HCT116 (cell line): ENCODE measurements at regions of chr1 and their contacts with region 1.

Region 1: GRCh38 chr1:156319664-156320063 is 18.4 kb downstream of the CCT3 start:
- DNase-seq: no peak
- ATAC-seq: no peak
- H3K4me3 ChIP-seq: no peak overlapping the region
- H3K27ac ChIP-seq: no peak overlapping the region
- H3K4me1 ChIP-seq: no peaks in the 10 kb centered on the region
- H3K27me3 ChIP-seq: no peaks in the 10 kb centered on the region
- CTCF ChIP-seq: peak; percentile 42 to 63 (median 53); a peak in 5 of 6 replicates
- POLR2A ChIP-seq: no peak
- RAD21 ChIP-seq: peak; percentile 62

Region 2: GRCh38 chr1:156140879-156141252 is 178.8 kb before region 1 on chr1:
- CTCF ChIA-PET with region 1: interaction called, 12 read pairs
- POLR2A ChIA-PET with region 1: no interaction called
- RAD21 ChIA-PET with region 1: no interaction called
- intact Hi-C with region 1: loop called (anchors 5 kb)
- DNase-seq: no peak
- ATAC-seq: no peak; the same call in 1 of the 2 replicates
- H3K4me3 ChIP-seq: no peak overlapping the region
- H3K27ac ChIP-seq: no peak overlapping the region
- H3K4me1 ChIP-seq: peaks cover 4 to 9% of the 10 kb centered on the region in 2 experiments
- H3K27me3 ChIP-seq: no peaks in the 10 kb centered on the region
- CTCF ChIP-seq: no peak
- POLR2A ChIP-seq: no peak
- RAD21 ChIP-seq: no peak

Region 3: DNA sequence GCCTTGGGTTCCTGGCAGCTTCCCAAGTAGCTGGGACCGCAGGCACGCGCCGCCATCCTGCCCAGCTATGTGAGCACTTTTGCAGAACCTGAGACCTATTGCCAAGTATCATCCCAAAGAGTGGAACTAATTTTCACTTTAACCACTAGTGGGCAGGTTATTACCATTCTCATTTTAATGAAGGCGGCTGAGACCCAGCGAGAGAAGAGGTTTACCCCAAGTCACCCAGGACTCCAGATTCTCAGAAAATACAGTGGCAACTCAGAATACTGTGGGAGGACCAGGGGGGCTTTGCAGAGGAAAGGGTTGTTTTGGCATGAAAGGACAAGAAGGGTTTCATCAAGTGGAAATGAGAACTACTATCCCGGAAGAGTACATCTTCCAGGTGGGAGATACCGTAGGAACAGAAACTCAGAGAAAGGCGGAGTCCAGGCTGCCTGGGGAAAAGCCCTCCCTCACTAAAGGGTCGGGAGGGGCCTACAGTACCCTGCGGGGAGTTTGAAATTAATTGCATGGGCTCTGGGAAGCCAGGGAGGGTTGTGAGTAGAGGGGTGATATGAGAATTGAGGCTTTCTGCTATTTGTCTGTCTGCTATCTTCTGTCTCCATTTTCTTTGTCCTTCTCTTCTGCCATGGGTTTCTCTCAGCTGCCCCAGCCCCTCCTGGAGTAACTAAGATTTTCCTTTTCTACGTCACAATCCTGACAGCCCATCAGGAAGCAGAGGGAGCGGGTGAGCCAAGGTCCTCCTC is 173.5 kb before region 1 on chr1:
- CTCF ChIA-PET with region 1: interaction called, 12 read pairs
- POLR2A ChIA-PET with region 1: no interaction called
- RAD21 ChIA-PET with region 1: no interaction called
- intact Hi-C with region 1: loop called (anchors 5 kb)
- DNase-seq: peak; percentile 74
- ATAC-seq: peak; percentile 82
- H3K4me3 ChIP-seq: no peak overlapping the region
- H3K27ac ChIP-seq: no peak overlapping the region
- H3K4me1 ChIP-seq: peaks cover 9 to 17% of the 10 kb centered on the region in 2 experiments
- H3K27me3 ChIP-seq: no peaks in the 10 kb centered on the region; the same call in 1 of the 2 replicates
- CTCF ChIP-seq: peak; percentile 61 to 91 (median 82)
- POLR2A ChIP-seq: no peak
- RAD21 ChIP-seq: peak; percentile 91